ENCODE measurements at regions of chr10 and their contacts with region 1.

Region 1: DNA sequence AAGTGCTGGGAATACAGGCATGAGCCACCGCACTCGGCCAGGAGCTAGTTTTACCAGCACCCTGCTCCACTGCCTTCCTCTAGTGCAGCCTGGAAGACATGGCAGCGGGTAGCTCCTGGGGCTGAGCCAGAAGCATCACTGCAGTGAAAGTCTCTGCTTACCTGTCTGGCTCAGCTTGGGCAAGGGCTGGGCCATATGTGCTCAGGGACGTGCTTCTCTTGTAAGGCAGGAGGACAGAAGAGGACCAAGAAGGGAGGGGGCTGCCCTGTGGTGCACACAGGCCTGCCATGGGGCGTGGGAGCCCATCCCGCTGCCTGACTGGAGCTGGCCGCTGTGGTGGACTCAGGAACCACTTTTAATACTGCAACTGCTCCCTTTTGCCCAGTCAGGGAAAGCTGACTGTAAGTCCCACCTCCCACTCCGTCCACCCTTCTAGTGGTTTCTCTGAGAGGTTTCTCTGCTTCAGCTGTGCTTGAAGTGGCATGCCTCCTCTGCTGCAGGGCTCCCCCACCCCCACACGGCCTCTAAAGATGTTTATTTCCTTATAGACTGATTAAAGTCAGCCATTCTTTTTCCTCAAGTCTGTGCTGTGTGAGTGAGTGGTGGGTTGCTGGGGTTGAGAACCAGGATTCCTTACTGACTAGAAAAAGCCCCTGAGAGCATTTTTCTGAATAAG is 25.3 kb upstream of the C10orf95 start:
- DNase-seq: peak in 6 of 10 donors; percentile 17 to 69 (median 44)
- ATAC-seq: peak; percentile 29 to 44
- H3K4me3 Mint-ChIP-seq: peak overlapping the region in 6 of 10 donors; percentile 28 to 65 (median 44)
- H3K27ac Mint-ChIP-seq: peak overlapping the region; percentile 70 to 94 (median 88)
- H3K4me1 Mint-ChIP-seq: peaks cover 24 to 54% (median 44%) of the 10 kb centered on the region in 4 donors
- H3K27me3 Mint-ChIP-seq: no peaks in the 10 kb centered on the region

Region 2: DNA sequence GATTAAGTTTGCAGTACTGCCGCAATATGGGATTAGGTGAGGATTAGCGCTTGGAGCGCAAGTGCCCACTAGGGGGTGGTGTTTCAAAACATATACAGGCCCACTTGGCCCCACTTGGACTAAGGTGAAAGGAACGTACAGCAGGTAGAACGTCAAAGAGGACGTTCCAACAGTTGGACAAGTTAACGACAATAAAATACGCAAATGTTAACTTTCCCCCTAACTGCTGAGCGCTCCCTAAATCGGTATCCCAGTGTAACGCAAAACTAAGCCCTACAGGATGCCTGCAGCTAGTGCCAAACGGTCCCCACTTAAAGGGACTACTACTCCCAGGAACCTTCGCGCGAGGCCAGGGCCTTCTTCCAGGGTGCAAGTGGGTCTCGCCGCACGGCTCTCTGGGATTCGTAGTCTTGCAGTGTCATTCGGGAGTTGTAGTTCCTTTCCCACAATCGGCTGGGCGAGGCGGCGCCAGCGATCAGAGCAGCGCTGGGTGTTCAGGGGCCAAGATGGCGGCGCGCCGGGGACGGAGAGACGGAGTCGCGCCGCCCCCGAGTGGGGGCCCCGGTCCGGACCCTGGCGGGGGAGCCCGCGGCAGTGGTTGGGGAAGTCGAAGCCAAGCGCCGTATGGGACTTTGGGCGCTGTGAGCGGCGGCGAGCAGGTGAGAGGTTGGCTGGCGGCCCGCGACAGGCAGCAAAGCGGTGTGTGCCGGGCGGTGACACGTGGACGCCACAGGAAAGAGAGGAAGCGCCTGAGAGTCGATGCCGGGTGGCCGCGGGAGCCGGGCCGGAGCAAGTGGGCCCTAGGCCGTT is 343.8 kb before region 1 on chr10 and contains the start of gene PPRC1:
- POLR2A ChIA-PET with region 1: interaction called, 12 read pairs
- DNase-seq: peak; percentile 91 to 98 (median 97)
- ATAC-seq: peak; percentile 93 to 94
- H3K4me3 Mint-ChIP-seq: peak within 1 kb of the TSS; percentile 96 to 100 (median 99)
- H3K27ac Mint-ChIP-seq: peak within 1 kb of the TSS; percentile 90 to 99 (median 98)
- H3K4me1 Mint-ChIP-seq: peaks cover 28 to 49% (median 44%) of the 10 kb centered on the region in 4 donors
- H3K27me3 Mint-ChIP-seq: no peaks in the 10 kb centered on the region
- polyA plus RNA-seq, gene PPRC1: 6.2 to 23.7 (median 13.5) TPM

Region 3: DNA sequence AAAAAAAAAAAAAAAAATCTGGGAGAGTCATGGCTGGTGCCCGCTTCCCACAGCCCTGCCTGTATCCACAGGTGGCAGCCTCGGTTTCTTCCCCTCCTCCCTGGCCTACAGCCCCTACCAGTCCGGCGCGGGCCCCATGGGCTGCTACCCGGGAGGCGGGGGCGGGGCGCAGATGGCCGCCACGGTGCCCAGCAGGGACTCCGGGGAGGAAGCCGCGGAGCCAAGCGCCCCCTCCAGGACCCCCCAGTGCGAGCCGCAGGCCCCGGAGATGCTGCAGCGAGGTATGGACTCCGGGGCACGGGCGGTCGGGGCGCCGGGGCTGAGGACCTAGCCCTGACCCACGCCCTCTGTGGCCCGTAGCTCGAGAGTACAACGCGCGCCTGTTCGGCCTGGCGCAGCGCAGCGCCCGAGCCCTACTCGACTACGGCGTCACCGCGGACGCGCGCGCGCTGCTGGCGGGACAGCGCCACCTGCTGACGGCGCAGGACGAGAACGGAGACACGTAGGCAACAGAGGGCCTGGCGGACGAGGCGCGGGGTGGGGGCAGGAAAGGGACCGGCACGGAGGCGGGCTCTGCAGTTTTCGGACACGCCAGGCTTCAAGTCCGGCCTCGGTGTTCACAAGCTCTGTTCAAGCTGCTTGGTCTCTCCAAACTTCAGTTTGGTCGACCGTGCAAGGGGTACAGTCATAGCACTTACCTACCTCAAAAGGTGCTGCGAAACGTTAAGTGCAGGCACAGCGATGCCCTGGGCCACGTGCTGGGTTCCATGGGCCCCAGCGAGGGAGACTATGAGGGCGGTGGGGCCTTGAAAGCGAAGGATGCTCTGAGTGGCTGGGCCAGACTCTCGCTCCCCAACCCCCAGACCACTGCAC is 77.2 kb before region 1 on chr10:
- POLR2A ChIA-PET with region 1: interaction called, 19 read pairs
- DNase-seq: peak; percentile 77 to 91 (median 88)
- ATAC-seq: peak; percentile 57 to 61
- H3K4me3 Mint-ChIP-seq: peak overlapping the region; percentile 63 to 81 (median 74)
- H3K27ac Mint-ChIP-seq: peak overlapping the region; percentile 32 to 100 (median 91)
- H3K4me1 Mint-ChIP-seq: peaks cover 12 to 44% (median 39%) of the 10 kb centered on the region in 4 donors
- H3K27me3 Mint-ChIP-seq: no peaks in the 10 kb centered on the region

Region 4: DNA sequence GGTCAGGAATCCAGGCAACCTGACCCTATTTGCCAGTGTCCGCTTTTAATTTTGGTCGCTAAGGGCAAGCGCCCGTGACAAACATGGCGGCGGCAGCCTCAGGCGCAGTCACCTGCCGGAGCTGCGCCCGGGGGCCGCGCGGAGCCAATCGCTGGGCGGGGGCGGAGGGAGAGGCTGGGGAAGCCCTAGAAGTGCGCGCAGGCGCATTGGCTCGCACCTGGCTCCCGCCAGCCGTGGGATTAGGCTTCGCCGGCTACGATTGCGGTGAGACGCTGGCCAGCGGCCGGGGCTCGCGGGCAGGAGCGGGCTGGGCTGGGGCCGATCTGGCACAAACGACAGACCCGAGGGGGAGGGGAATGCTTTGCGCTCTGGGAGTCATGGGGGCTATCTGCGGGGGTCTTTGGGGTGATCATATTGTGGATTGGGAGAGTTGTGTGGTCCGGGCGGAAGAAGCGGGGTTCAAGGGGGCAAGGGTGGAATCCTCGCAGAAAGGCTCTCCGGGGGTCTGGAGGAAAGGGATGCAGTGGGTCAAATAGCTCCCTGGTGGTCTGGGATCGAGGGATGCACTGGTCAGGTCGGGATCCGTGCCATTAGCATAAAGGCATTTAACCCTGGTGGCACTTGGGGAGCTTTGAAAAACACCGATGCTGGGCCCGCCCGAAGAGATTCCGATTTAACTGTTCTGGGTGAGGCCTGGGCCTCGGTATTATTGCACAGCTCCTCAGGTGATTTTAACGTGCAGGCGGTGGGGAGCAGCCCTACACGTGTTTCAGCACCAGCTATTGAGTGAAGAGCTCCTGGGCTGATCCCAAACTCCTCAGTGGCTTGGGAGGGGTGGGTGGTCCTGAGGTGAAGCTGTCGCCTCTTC is 15.2 kb before region 1 on chr10:
- POLR2A ChIA-PET with region 1: interaction called, 36 read pairs
- DNase-seq: peak; percentile 85 to 95 (median 90)
- ATAC-seq: peak; percentile 99 to 100
- H3K4me3 Mint-ChIP-seq: peak overlapping the region; percentile 86 to 98 (median 92)
- H3K27ac Mint-ChIP-seq: peak overlapping the region; percentile 73 to 93 (median 86)
- H3K4me1 Mint-ChIP-seq: peaks cover 28 to 44% (median 32%) of the 10 kb centered on the region in 4 donors
- H3K27me3 Mint-ChIP-seq: peaks cover 0 to 1% (median 0%) of the 10 kb centered on the region in 5 donors

Region 5: DNA sequence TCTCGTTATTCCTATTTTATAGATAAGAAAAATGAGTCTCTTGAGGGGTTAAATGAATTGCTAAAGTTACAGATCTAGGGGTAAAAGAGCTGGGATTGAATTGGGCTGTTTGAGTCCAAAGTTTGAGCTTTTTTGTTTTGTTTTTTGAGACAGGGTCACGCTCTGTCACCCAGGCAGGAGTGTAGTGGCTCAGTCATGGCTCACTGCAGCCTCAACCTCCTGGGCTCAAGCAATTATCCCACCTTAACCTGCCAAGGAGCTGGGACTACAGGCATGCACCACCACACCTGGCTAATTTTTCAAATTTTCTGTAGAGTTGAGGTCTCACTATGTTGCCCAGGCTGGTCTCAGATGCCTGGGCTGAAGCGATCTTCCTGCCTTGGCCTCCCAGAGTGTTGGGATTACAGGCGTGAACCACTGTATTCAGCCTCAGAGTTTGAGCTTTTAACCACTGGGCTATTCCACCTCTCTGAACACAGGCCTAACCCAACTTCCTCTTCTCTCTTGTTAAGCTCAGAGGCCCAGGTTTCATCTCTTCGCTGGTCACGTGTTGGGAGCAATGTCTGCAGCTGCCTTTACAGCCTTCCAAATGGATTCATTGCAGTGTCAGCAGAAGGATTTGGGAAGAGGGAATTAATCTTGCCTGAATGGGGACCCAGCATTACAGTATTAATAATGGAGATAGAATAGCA is 35.1 kb after region 1 on chr10:
- POLR2A ChIA-PET with region 1: no interaction called
- DNase-seq: no peak
- ATAC-seq: peak in 1 of 2 donors; percentile 56
- H3K4me3 Mint-ChIP-seq: peak overlapping the region in 1 of 10 donors; percentile 14
- H3K27ac Mint-ChIP-seq: peak overlapping the region; percentile 11 to 77 (median 53)
- H3K4me1 Mint-ChIP-seq: peaks cover 14 to 28% (median 22%) of the 10 kb centered on the region in 4 donors
- H3K27me3 Mint-ChIP-seq: no peaks in the 10 kb centered on the region

Measured in naive thymus-derived CD8-positive, alpha-beta T cell (primary cell).